ENCODE measurements at regions of chr10 and their contacts with region 1.

Region 1: GRCh38 chr10:69087590-69088470 is at the start of gene SRGN:
- DNase-seq: peak; percentile 95
- H3K4me3 Mint-ChIP-seq: peak within 1 kb of the TSS; percentile 88
- H3K27ac Mint-ChIP-seq: peak within 1 kb of the TSS; percentile 93
- H3K4me1 Mint-ChIP-seq: peaks cover 50% of the 10 kb centered on the region
- H3K27me3 Mint-ChIP-seq: no peaks in the 10 kb centered on the region
- total RNA-seq, gene SRGN: 996 and 999 TPM in 2 replicates

Region 2: GRCh38 chr10:68955832-68956532 is 131.8 kb before region 1 on chr10 and contains the start of gene DDX21:
- intact Hi-C with region 1: loop called (anchors 1 kb)
- DNase-seq: peak; percentile 97
- H3K4me3 Mint-ChIP-seq: peak within 1 kb of the TSS; percentile 93
- H3K27ac Mint-ChIP-seq: peak within 1 kb of the TSS; percentile 99
- H3K4me1 Mint-ChIP-seq: peaks cover 26% of the 10 kb centered on the region
- H3K27me3 Mint-ChIP-seq: no peaks in the 10 kb centered on the region
- total RNA-seq, gene DDX21: 284 and 286 TPM in 2 replicates

Region 3: GRCh38 chr10:69033256-69033655 is 54.6 kb before region 1 on chr10:
- intact Hi-C with region 1: no loop called
- DNase-seq: no peak
- H3K4me3 Mint-ChIP-seq: no peak overlapping the region
- H3K27ac Mint-ChIP-seq: no peak overlapping the region
- H3K4me1 Mint-ChIP-seq: peaks cover 2% of the 10 kb centered on the region
- H3K27me3 Mint-ChIP-seq: no peaks in the 10 kb centered on the region

Region 4: GRCh38 chr10:69045441-69046300 is 42.2 kb before region 1 on chr10:
- intact Hi-C with region 1: loop called (anchors 1 kb)
- DNase-seq: peak; percentile 83
- H3K4me3 Mint-ChIP-seq: peak overlapping the region; percentile 73
- H3K27ac Mint-ChIP-seq: peak overlapping the region; percentile 99
- H3K4me1 Mint-ChIP-seq: peaks cover 43% of the 10 kb centered on the region
- H3K27me3 Mint-ChIP-seq: no peaks in the 10 kb centered on the region

Region 5: GRCh38 chr10:69065406-69066361 is 22.1 kb before region 1 on chr10:
- intact Hi-C with region 1: loop called (anchors 1 kb)
- DNase-seq: peak; percentile 79
- H3K4me3 Mint-ChIP-seq: peak overlapping the region; percentile 82
- H3K27ac Mint-ChIP-seq: peak overlapping the region; percentile 99
- H3K4me1 Mint-ChIP-seq: peaks cover 40% of the 10 kb centered on the region
- H3K27me3 Mint-ChIP-seq: no peaks in the 10 kb centered on the region

Region 6: GRCh38 chr10:69567920-69568319 is 480.1 kb after region 1 on chr10:
- intact Hi-C with region 1: no loop called
- DNase-seq: peak; percentile 81
- H3K4me3 Mint-ChIP-seq: no peak overlapping the region
- H3K27ac Mint-ChIP-seq: no peak overlapping the region
- H3K4me1 Mint-ChIP-seq: peaks cover 5% of the 10 kb centered on the region
- H3K27me3 Mint-ChIP-seq: peaks cover 63% of the 10 kb centered on the region

Region 7: DNA sequence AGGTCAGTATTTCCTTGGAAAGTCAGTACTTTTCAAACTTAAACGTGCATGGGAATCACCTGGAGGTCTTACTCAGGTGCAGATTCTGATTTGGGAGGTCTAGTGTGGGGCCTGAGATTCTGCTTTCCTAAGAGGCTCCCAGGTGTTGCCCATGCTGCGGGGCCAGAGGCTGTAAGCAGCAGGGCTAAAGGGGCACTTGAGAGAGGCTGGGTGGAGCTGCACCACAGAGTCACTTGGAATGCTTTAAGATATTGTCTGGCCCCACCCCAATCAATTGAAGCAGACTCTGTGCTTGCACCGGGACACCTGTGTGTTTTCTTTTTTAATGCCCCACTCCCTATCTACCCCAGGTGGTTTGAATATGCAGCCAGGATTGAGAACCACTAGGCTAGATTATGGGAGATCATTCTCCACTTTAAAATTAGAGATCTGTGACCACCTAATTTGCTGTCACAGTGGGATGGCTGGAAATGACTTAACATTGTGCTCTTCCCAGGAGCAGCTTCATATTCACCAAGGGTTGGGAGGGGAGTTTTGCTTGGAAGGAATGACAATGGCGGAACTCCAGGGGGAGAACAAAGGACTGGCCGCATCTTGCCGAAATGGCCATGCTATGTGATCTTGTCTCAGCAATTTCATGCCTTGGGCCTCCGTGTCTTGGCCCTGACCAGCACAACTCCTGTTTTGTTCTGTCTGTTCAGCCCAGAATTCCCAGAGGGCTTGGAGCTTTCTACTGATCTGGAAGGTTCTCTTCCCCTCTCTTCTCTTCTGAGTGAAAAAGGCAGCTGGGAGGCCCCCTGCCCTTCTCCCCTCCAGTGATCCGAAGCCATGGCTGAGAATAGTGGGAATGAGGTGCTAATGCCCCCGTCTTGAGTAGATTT is 622.4 kb after region 1 on chr10:
- intact Hi-C with region 1: no loop called
- DNase-seq: no peak
- H3K4me3 Mint-ChIP-seq: no peak overlapping the region
- H3K27ac Mint-ChIP-seq: no peak overlapping the region
- H3K4me1 Mint-ChIP-seq: no peaks in the 10 kb centered on the region
- H3K27me3 Mint-ChIP-seq: peaks cover 21% of the 10 kb centered on the region

Region 8: GRCh38 chr10:70052462-70053217 is 964.8 kb after region 1 on chr10 and contains the start of gene MACROH2A2:
- intact Hi-C with region 1: no loop called
- DNase-seq: peak; percentile 66
- H3K4me3 Mint-ChIP-seq: peak within 1 kb of the TSS; percentile 84
- H3K27ac Mint-ChIP-seq: no peak within 1 kb of the TSS
- H3K4me1 Mint-ChIP-seq: peaks cover 4% of the 10 kb centered on the region
- H3K27me3 Mint-ChIP-seq: peaks cover 57% of the 10 kb centered on the region
- total RNA-seq, gene MACROH2A2: 4.5 and 4.6 TPM in 2 replicates